ENCODE measurements at regions of chr4 and their contacts with region 1.

Region 1: GRCh38 chr4:152500800-152501434 is 35.0 kb downstream of the FBXW7 start:
- DNase-seq: peak; percentile 63
- ATAC-seq: peak; percentile 67
- H3K4me3 Mint-ChIP-seq: no peak overlapping the region
- H3K27ac Mint-ChIP-seq: no peak overlapping the region
- H3K4me1 Mint-ChIP-seq: peaks cover 26% of the 10 kb centered on the region
- H3K27me3 Mint-ChIP-seq: no peaks in the 10 kb centered on the region

Region 2: DNA sequence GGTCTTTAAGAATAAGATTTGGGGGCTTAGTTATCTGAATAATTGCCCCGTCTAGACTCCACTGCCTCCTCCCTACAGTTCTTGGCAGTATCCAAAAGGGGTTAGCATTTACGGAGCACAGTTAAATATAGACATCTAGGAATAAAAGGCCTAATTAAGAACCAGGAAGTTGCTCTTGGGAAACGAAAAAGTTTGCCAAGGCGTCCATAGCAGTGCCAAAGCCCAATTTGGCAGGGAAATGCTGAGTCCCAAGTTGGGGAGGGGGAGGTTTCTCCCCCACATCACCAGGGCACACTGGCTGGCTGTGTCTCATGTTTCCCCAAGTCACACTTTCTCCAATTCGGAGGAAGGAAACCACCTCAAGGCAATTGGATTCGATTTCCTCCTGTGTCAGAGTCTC is 303.7 kb before region 1 on chr4:
- CTCF ChIA-PET with region 1: no interaction called
- POLR2A ChIA-PET with region 1: no interaction called
- intact Hi-C with region 1: no loop called
- DNase-seq: no peak
- ATAC-seq: no peak
- H3K4me3 Mint-ChIP-seq: no peak overlapping the region
- H3K27ac Mint-ChIP-seq: no peak overlapping the region
- H3K4me1 Mint-ChIP-seq: no peaks in the 10 kb centered on the region
- H3K27me3 Mint-ChIP-seq: no peaks in the 10 kb centered on the region

Region 3: DNA sequence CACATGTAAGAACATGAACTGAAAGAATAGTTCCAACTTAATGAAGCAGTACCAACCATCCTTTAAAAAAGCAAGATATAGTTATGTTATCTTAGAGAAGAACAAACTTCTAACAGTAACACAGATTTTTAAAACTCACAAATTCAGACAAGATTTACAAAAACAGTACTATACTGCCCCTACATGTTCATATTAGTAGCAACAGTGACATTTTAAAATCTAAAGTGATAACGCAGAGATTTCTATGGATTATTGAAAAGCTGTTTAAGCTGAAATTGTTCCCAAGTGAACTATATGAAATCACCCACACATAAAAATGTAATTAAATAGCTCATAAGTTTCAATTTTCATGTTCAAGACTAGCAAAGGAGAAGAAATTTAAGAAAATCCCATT is 131.0 kb before region 1 on chr4:
- CTCF ChIA-PET with region 1: no interaction called
- POLR2A ChIA-PET with region 1: no interaction called
- intact Hi-C with region 1: no loop called
- DNase-seq: no peak
- ATAC-seq: no peak
- H3K4me3 Mint-ChIP-seq: no peak overlapping the region
- H3K27ac Mint-ChIP-seq: no peak overlapping the region
- H3K4me1 Mint-ChIP-seq: peaks cover 23% of the 10 kb centered on the region
- H3K27me3 Mint-ChIP-seq: no peaks in the 10 kb centered on the region

Region 4: DNA sequence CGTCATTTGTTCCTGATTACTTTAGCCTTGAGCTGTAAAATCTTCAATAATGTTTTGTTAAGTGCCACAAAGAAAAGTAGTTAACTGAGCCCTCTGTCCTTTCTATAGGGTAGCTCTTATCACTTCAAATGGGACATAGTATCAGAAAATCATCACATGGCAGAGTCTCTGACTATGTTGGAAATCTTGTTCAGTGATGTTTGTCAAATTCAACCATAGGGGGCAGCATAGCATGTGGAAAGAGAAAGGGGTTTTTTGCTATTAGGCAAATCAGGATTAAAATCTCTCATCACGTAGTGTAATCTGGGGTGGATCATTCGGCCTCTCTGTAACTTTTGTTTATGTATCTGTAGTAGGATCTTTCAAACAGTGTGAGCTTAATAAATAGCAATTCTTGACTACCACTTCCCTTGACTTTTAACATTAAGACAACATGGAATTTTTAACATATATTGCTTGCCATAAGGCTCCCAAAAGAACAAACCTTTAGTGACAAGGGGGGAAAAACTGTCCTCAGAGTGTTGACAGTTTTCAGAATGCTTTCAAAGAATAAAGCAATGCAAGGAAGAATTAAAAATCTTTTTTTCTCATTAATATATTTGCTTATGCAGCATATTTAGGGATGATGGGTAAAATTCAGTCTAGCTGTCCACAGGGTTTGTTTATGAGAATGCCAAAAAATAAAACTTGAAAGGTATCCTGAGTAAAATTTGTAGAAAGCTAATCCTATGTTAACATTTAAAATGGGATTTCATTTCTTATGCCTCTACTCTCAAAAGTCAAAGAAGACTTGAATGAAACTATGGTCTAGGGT is 92.2 kb before region 1 on chr4:
- CTCF ChIA-PET with region 1: interaction called, 12 read pairs
- POLR2A ChIA-PET with region 1: no interaction called
- intact Hi-C with region 1: loop called in 1 of 2 experiments (anchors 5 kb)
- DNase-seq: peak; percentile 18
- ATAC-seq: peak; percentile 65
- H3K4me3 Mint-ChIP-seq: no peak overlapping the region
- H3K27ac Mint-ChIP-seq: no peak overlapping the region
- H3K4me1 Mint-ChIP-seq: peaks cover 13% of the 10 kb centered on the region
- H3K27me3 Mint-ChIP-seq: no peaks in the 10 kb centered on the region

Region 5: DNA sequence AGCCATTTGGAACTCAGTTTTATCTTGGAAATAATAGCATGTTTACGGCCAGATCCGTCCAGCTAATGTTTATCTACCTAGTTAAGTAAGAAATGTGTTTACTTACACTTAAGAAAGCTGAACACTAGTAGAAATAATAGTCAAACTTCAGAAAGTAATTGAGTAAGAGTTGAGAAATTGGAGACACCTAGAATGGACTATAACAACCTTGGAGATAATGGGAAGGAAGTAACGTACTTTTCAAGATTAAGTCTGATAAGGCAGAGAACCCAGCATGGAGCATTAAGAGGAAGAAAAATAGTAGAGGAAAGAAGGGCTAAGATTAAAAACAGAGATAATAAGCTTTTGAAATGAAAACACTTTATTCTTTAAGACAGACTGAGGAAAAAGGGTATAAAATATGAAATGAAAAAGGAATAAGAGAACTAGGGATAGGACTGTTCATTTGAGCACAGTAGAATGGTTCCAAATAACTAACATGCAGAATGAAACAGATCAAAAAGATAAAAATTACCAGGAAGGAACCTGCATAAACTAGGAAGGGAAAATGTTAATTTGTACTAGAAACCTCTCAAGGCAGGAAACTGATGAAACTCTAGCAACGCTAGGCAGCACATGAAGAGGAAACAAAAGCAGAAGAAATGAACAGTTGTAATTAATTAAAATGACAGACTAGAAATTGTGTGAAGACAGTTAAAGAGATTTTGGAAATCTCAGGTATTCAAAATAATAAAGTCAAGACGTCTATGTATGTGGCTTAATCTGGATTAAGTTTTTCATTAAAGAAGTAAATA is 36.7 kb before region 1 on chr4:
- CTCF ChIA-PET with region 1: interaction called, 10 read pairs
- POLR2A ChIA-PET with region 1: no interaction called
- intact Hi-C with region 1: no loop called
- DNase-seq: no peak
- ATAC-seq: peak; percentile 49
- H3K4me3 Mint-ChIP-seq: peak overlapping the region; percentile 24
- H3K27ac Mint-ChIP-seq: peak overlapping the region; percentile 79
- H3K4me1 Mint-ChIP-seq: peaks cover 45% of the 10 kb centered on the region
- H3K27me3 Mint-ChIP-seq: no peaks in the 10 kb centered on the region

Region 6: DNA sequence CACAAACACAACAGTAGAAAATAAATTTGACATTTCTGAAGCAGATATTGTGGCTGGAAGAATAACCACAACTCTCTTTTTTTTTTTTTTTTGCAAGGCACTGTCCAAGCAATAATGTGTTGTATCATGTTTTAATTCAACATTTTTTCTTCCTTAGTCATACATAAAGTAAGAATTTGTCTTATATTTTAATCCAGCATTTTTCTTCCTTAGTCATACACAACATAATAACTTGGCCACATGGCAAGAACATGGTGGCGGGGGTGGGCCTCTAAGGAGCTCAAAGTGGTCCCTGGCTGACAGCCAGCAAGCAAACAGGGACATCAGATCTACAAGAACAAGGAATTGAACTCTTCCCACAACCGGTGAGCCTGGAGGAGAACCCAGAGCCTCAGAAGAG is 14.8 kb after region 1 on chr4:
- CTCF ChIA-PET with region 1: interaction called, 26 read pairs
- POLR2A ChIA-PET with region 1: interaction called, 3 read pairs
- intact Hi-C with region 1: no loop called
- DNase-seq: no peak
- ATAC-seq: no peak
- H3K4me3 Mint-ChIP-seq: no peak overlapping the region
- H3K27ac Mint-ChIP-seq: no peak overlapping the region
- H3K4me1 Mint-ChIP-seq: peaks cover 30% of the 10 kb centered on the region
- H3K27me3 Mint-ChIP-seq: no peaks in the 10 kb centered on the region

Region 7: GRCh38 chr4:152556283-152556682 is 55.4 kb after region 1 on chr4:
- CTCF ChIA-PET with region 1: interaction called, 13 read pairs
- POLR2A ChIA-PET with region 1: no interaction called
- intact Hi-C with region 1: no loop called
- DNase-seq: no peak
- ATAC-seq: no peak
- H3K4me3 Mint-ChIP-seq: peak overlapping the region; percentile 27
- H3K27ac Mint-ChIP-seq: peak overlapping the region; percentile 53
- H3K4me1 Mint-ChIP-seq: peaks cover 55% of the 10 kb centered on the region
- H3K27me3 Mint-ChIP-seq: no peaks in the 10 kb centered on the region

Region 8: DNA sequence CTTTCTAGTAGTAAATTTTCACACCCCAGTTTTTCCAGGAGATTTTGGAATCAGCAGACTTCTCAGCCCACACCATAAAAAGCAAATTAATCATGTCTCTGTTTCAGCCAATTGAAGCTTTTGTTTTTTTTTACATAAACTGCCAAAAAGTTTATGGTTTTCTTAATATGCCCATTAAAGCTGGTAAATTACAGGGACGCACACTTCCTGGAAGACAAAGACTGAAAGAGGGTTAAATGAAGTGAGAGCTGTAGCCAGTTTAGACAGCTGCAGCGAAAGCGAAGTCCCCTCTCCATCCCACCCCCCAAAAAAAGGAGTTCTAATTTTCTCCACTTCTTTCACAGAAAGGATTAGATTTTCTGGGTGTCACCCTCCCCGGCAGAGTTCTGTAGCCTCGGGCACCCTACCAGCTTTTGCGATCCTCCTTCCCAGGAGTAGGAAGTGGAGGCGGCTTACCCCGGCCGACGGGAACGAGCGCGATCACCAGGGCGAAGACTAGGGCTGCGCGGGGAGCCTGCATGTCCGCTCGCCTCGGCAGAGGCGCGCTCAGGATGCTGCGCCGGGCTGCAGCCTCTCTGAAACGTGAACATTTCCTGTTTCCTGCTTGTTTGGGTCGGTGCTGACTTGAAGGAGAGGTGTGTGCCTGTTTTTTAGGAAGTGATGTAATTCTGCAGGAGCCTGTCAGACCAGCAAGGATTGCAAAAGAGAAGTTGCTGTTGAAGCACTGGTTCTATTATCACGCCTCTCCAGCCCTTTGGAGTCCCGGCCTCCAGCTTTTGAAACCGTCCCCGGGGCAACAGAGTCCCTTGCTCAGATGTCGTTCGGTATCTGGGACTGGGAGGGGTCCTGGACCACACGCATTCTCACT is 178.7 kb after region 1 on chr4 and contains the start of gene TMEM154:
- CTCF ChIA-PET with region 1: interaction called, 12 read pairs
- POLR2A ChIA-PET with region 1: no interaction called
- intact Hi-C with region 1: no loop called
- DNase-seq: peak; percentile 80
- ATAC-seq: peak; percentile 91
- H3K4me3 Mint-ChIP-seq: peak within 1 kb of the TSS; percentile 84
- H3K27ac Mint-ChIP-seq: peak within 1 kb of the TSS; percentile 85
- H3K4me1 Mint-ChIP-seq: peaks cover 53% of the 10 kb centered on the region
- H3K27me3 Mint-ChIP-seq: no peaks in the 10 kb centered on the region
- total RNA-seq, gene TMEM154: 15.2 to 21.2 TPM

Measured in activated CD4-positive, alpha-beta T cell treated with anti-CD3 and anti-CD28 coated beads for 36 hours (primary cell).